ENCODE measurements at regions of chr1 and their contacts with region 1.

Region 1: DNA sequence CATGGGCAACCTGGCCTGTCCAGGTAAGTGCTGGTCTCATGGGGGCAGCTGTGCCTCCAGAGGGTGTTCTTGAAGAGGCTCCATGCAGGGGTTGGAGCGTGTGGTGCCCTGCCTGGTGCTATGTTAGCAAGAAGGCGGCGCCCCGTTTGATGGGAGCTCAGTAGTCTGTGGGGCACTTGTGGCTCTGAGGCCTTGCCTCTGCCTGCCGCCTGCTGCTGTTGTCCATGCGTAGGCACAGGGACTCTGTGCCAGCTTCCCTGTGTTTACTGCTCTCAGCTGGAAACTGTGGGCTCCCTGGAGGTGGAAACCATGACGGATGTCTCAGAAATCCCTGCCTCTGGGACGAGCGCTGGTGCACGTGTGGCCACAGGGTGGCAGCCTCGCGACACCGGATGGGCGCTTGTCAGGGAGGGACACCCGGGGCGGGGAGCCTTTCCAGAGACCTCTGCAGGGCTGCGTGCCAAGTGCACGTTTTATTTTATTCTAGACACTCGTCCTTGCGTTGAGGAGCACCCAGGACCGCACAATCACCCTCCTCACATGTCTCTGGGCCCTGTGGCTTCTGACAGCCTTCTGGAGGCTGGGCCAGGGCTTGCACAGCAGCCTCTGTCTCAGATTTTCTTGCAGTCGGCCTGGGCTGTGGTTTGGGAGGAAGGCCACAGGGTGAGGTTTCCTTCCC is 27.1 kb downstream of the SNAP47 start:
- DNase-seq: peak; percentile 81
- H3K4me3 Mint-ChIP-seq: peak overlapping the region; percentile 47
- H3K27ac Mint-ChIP-seq: peak overlapping the region; percentile 77
- H3K4me1 Mint-ChIP-seq: peaks cover 91% of the 10 kb centered on the region
- H3K27me3 Mint-ChIP-seq: no peaks in the 10 kb centered on the region

Region 2: GRCh38 chr1:227257964-227258363 is 504.4 kb before region 1 on chr1:
- intact Hi-C with region 1: no loop called
- DNase-seq: no peak
- H3K4me3 Mint-ChIP-seq: no peak overlapping the region
- H3K27ac Mint-ChIP-seq: no peak overlapping the region
- H3K4me1 Mint-ChIP-seq: no peaks in the 10 kb centered on the region
- H3K27me3 Mint-ChIP-seq: peaks cover 4% of the 10 kb centered on the region

Region 3: DNA sequence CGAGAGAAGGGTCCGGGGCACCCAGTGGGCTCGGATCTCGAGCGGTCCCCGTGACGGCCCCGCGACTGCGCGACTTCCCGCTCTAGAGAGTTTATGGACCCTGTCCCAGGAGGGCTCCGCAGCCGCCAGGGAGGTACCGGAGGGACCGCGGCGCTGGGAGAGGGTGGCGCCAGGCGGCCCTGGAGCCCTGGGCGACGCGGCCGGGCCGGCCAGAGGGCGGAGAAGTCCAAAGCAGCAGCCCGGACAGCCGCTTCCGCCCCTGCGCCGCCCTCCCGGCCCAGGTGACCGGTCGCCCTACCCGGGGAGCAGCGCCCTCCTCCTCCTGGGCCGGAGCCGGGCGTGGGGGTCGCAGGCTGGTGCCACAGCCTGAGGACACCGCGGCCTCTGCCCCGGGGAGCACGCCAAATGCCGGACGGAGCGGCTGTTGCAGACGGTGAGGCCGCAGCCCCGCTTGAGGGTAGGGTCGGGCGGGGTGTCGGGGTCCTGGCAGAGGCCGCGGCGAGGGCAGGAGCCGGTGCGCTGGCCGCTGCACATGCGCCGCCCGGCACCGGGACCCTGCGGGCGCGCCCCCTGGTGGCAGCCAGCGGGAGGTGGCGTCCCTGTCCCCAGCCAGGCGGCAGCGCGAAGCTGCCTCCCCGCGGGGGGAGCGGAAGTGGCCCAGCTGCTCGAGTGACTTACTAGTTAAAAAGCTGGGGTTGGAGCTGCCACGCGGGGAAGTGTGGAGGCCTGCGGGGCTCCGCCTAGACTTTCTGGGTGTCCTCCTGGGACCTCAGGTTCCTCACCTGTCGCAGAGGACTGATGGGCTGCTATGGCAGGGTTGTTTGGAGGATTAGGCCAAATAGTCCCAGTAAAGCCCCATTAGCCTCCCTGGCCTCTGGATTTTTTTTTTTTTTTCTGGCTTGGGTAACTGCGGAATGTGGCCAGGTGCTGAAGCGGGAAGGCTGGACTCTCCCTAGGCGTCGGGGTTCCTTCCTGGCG is 219.9 kb before region 1 on chr1:
- intact Hi-C with region 1: loop called (anchors 5 kb)
- DNase-seq: peak; percentile 87
- H3K4me3 Mint-ChIP-seq: peak overlapping the region; percentile 56
- H3K27ac Mint-ChIP-seq: peak overlapping the region; percentile 55
- H3K4me1 Mint-ChIP-seq: no peaks in the 10 kb centered on the region
- H3K27me3 Mint-ChIP-seq: no peaks in the 10 kb centered on the region

Region 4: GRCh38 chr1:227666286-227666685 is 96.1 kb before region 1 on chr1:
- intact Hi-C with region 1: no loop called
- DNase-seq: no peak
- H3K4me3 Mint-ChIP-seq: no peak overlapping the region
- H3K27ac Mint-ChIP-seq: no peak overlapping the region
- H3K4me1 Mint-ChIP-seq: no peaks in the 10 kb centered on the region
- H3K27me3 Mint-ChIP-seq: no peaks in the 10 kb centered on the region

Region 5: GRCh38 chr1:227734856-227735538 is 27.4 kb before region 1 on chr1 and contains the starts of genes JMJD4 and SNAP47:
- intact Hi-C with region 1: loop called (anchors 1 kb)
- DNase-seq: peak; percentile 93
- H3K4me3 Mint-ChIP-seq: peak within 1 kb of the TSS; percentile 98
- H3K27ac Mint-ChIP-seq: peak within 1 kb of the TSS; percentile 97
- H3K4me1 Mint-ChIP-seq: peaks cover 25% of the 10 kb centered on the region
- H3K27me3 Mint-ChIP-seq: no peaks in the 10 kb centered on the region
- total RNA-seq, gene JMJD4: 33.9 and 37.5 TPM in 2 replicates
- total RNA-seq, gene SNAP47: 32.2 and 33.7 TPM in 2 replicates

Region 6: GRCh38 chr1:227787513-227788270 is 25.3 kb after region 1 on chr1:
- intact Hi-C with region 1: loop called (anchors 1 kb)
- DNase-seq: peak; percentile 86
- H3K4me3 Mint-ChIP-seq: peak overlapping the region; percentile 82
- H3K27ac Mint-ChIP-seq: peak overlapping the region; percentile 34
- H3K4me1 Mint-ChIP-seq: peaks cover 23% of the 10 kb centered on the region
- H3K27me3 Mint-ChIP-seq: peaks cover 9% of the 10 kb centered on the region

Region 7: GRCh38 chr1:227946624-227947385 is 184.4 kb after region 1 on chr1:
- intact Hi-C with region 1: loop called (anchors 1 kb)
- DNase-seq: peak; percentile 31
- H3K4me3 Mint-ChIP-seq: peak overlapping the region; percentile 68
- H3K27ac Mint-ChIP-seq: no peak overlapping the region
- H3K4me1 Mint-ChIP-seq: no peaks in the 10 kb centered on the region
- H3K27me3 Mint-ChIP-seq: peaks cover 36% of the 10 kb centered on the region

Region 8: DNA sequence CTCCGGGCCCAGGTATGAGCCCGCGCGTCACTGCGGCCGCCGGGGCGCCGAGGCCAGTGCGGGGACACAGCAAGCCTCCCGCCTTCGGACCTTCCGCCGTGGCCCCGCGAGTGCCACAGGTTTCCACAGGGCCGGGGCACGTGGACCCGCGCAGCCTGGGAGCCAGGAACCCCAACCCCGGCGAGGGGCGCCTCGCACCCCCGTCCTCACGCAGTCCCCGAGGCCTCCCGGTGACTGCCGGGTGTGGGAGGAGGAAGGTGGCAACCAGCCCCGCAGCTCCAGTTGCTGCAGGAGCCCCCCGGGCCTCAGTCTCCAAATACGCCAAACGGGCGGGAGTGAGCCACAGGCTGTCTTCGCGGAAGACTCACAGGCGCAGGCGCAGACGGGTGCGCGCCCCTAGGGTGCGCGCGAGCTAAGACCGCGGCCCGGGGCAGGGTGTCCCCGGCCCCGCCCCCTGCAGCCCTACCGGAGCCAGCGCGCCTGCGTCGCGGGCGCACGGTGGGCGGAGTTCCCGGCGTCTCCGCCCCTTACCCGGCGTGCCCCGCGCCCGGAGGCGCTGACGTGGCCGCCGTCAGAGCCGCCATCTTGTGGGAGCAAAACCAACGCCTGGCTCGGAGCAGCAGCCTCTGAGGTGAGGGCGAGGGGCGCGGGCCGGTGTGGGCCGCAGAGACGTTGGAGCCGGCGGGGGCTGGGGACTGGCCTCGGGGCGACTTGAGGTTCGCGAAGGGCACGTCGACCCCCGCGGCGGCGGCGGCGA is 319.9 kb after region 1 on chr1 and contains the start of gene ARF1:
- intact Hi-C with region 1: loop called (anchors 10 kb)
- DNase-seq: peak; percentile 91
- H3K4me3 Mint-ChIP-seq: peak within 1 kb of the TSS; percentile 97
- H3K27ac Mint-ChIP-seq: peak within 1 kb of the TSS; percentile 91
- H3K4me1 Mint-ChIP-seq: peaks cover 37% of the 10 kb centered on the region
- H3K27me3 Mint-ChIP-seq: no peaks in the 10 kb centered on the region
- total RNA-seq, gene ARF1: 404 TPM in 2 replicates